Heart right ventricle (tissue), 16 donors: ENCODE measurements at regions of chr10 and their contacts with region 1.

Region 1: GRCh38 chr10:124748166-124748565 is 4.0 kb upstream of the FAM53B start:
- DNase-seq: no peak
- ATAC-seq: no peak
- H3K4me3 ChIP-seq: no peak overlapping the region
- H3K27ac ChIP-seq: no peak overlapping the region
- H3K4me1 ChIP-seq: peaks cover 0 to 14% (median 13%) of the 10 kb centered on the region in 9 donors
- H3K27me3 ChIP-seq: no peaks in the 10 kb centered on the region
- CTCF ChIP-seq: no peak

Region 2: DNA sequence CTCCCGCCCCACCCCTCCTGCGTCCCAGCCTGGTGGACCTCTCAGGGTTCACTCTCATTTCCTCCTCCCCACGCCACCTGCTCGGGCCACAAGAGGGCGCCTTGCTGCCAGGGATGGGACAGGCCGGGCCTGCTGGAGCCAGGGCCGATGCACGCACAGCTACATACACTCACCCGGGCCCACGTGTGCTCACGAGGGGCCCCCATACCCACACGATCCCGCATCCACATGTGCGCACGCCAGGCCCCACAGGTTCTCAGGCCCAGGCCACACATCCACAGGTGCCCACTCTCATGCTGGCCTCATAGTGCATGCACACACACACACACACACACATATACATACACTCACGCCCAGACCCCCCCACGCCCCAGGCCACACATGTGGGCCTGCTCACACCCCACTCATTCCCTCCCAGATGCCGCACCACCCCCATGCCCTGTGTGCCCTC is 217.9 kb before region 1 on chr10:
- intact Hi-C with region 1: loop called in 6 of 10 experiments (anchors 1 to 5 kb)
- DNase-seq: peak; percentile 87 to 90
- ATAC-seq: peak; percentile 75 to 91 (median 84)
- H3K4me3 ChIP-seq: no peak overlapping the region
- H3K27ac ChIP-seq: no peak overlapping the region
- H3K4me1 ChIP-seq: peaks cover 0 to 24% (median 6%) of the 10 kb centered on the region in 9 donors
- H3K27me3 ChIP-seq: no peaks in the 10 kb centered on the region
- CTCF ChIP-seq: peak; percentile 84 to 92 (median 89)

Region 3: GRCh38 chr10:124802313-124802675 is 54.1 kb after region 1 on chr10:
- intact Hi-C with region 1: loop called in 1 of 10 experiments (anchors 1 kb)
- DNase-seq: no peak
- ATAC-seq: peak in 1 of 8 donors; percentile 22
- H3K4me3 ChIP-seq: peak overlapping the region; percentile 90 to 100 (median 99)
- H3K27ac ChIP-seq: peak overlapping the region in 9 of 10 donors; percentile 77 to 94 (median 86)
- H3K4me1 ChIP-seq: peaks cover 5 to 23% (median 17%) of the 10 kb centered on the region in 9 donors
- H3K27me3 ChIP-seq: no peaks in the 10 kb centered on the region
- CTCF ChIP-seq: no peak